Activated T-helper 2 cell treated with anti-CD3 and anti-CD28 coated beads, Interferon-gamma antibody, Interleukin-2, Interleukin-4, amounts not matched to agents 10 μg/mL and 5 μg/mL and 100 μg/mL, durations not matched to agents 14 hours and 24 hours and 36 hours (primary cell): ENCODE measurements at regions of chr16 and their contacts with region 1.

Region 1: DNA sequence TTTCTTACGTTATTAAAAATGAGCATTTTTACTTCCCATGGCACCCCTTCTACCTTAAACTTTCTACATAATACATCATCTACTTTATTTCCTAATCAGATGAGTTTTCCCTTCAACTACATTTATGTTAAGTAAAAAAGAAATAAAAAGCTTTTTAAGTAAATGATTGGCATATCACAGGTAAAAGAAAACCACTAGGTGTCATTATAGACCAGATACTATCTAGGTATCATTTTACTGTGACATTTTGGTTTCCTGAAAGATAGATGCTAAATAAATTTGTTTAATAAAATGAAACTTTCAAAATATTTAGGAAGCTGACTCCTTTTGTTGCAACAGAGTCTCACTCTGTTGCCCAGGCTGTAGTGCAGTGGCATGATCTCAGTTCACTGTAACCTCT is 3.8 kb upstream of the CMTM1 start:
- DNase-seq: no peak
- H3K4me3 Mint-ChIP-seq: no peak overlapping the region
- H3K27ac Mint-ChIP-seq: peak overlapping the region; percentile 58
- H3K4me1 Mint-ChIP-seq: peaks cover 52% of the 10 kb centered on the region
- H3K27me3 Mint-ChIP-seq: no peaks in the 10 kb centered on the region

Region 2: GRCh38 chr16:66521951-66522771 is 40.2 kb before region 1 on chr16:
- intact Hi-C with region 1: loop called (anchors 1 kb)
- DNase-seq: peak; percentile 83
- H3K4me3 Mint-ChIP-seq: peak overlapping the region; percentile 49
- H3K27ac Mint-ChIP-seq: peak overlapping the region; percentile 85
- H3K4me1 Mint-ChIP-seq: peaks cover 74% of the 10 kb centered on the region
- H3K27me3 Mint-ChIP-seq: no peaks in the 10 kb centered on the region